ENCODE measurements at regions of chr9 and their contacts with region 1.

Region 1: DNA sequence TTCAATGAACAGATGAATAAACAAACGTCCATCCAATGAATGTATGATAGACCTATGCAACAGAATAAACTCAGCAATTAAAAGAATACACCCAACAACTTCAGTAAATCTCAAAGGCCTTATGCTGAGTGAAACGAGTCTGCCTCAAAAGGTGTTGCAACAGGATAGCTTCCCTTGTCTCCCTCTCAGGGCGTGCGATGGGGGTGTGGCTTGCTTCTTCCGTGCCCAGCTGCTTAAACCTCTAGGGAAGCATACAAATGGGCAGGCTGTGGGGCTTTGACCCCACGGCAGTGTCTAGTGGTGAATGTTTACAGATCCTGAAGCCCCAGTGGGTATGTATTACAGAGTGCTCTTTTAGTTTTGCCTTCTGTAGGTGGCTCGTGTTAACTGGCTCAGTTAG is 87.0 kb upstream of the CCL21 start:
- DNase-seq: no peak
- H3K4me3 ChIP-seq: no peak overlapping the region
- H3K27ac ChIP-seq: no peak overlapping the region
- H3K4me1 ChIP-seq: no peaks in the 10 kb centered on the region
- H3K27me3 ChIP-seq: no peaks in the 10 kb centered on the region
- CTCF ChIP-seq: no peak
- EP300 ChIP-seq: no peak
- POLR2A ChIP-seq: no peak

Region 2: GRCh38 chr9:34665381-34666250 is 131.3 kb before region 1 on chr9:
- intact Hi-C with region 1: no loop called
- DNase-seq: peak; percentile 96 to 98 (median 98)
- H3K4me3 ChIP-seq: peak overlapping the region; percentile 81
- H3K27ac ChIP-seq: peak overlapping the region; percentile 94 to 98
- H3K4me1 ChIP-seq: peaks cover 4% of the 10 kb centered on the region
- H3K27me3 ChIP-seq: no peaks in the 10 kb centered on the region
- CTCF ChIP-seq: peak in 1 of 3 donors; percentile 45
- EP300 ChIP-seq: peak; percentile 40
- POLR2A ChIP-seq: peak; percentile 95

Region 3: DNA sequence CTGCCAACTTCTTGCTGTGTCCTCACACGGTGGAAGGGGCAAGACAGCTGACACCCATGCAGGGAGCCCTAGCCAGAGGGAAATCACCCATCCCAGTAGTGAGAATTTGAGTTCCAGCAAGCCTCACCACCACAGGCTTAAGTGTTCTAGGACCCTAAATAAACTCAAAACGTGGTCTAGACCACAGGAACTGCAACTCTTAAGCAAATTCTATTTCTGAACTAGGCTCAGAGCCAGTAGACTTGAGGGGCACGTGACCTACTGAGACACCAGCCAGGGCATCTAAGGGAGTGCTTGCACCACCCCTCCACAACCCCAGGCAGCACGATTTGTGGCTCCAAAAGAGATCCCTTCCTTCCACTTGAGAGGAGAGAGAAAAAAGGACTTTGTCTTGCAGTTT is 65.1 kb after region 1 on chr9:
- intact Hi-C with region 1: loop called in 1 of 4 experiments (anchors 10 kb)
- DNase-seq: no peak
- H3K4me3 ChIP-seq: no peak overlapping the region
- H3K27ac ChIP-seq: no peak overlapping the region
- H3K4me1 ChIP-seq: no peaks in the 10 kb centered on the region
- H3K27me3 ChIP-seq: no peaks in the 10 kb centered on the region
- CTCF ChIP-seq: no peak
- EP300 ChIP-seq: no peak
- POLR2A ChIP-seq: no peak

Region 4: GRCh38 chr9:34876096-34876495 is 79.2 kb after region 1 on chr9:
- intact Hi-C with region 1: no loop called
- DNase-seq: no peak
- H3K4me3 ChIP-seq: no peak overlapping the region
- H3K27ac ChIP-seq: no peak overlapping the region
- H3K4me1 ChIP-seq: no peaks in the 10 kb centered on the region
- H3K27me3 ChIP-seq: no peaks in the 10 kb centered on the region
- CTCF ChIP-seq: no peak
- EP300 ChIP-seq: no peak
- POLR2A ChIP-seq: no peak